B cell (primary cell): ENCODE measurements at regions of chr1 and their contacts with region 1.

Region 1: GRCh38 chr1:31762726-31763670 is 1.1 kb downstream of the ADGRB2 start:
- DNase-seq: peak; percentile 83
- ATAC-seq: peak; percentile 56
- H3K4me3 ChIP-seq: peak overlapping the region in 4 of 5 experiments; percentile 33 to 61 (median 50)
- H3K4me3 Mint-ChIP-seq: peak overlapping the region; percentile 83
- H3K27ac ChIP-seq: no peak overlapping the region
- H3K27ac Mint-ChIP-seq: peak overlapping the region; percentile 15
- H3K4me1 ChIP-seq: peaks cover 35 to 42% of the 10 kb centered on the region in 2 donors
- H3K4me1 Mint-ChIP-seq: peaks cover 34% of the 10 kb centered on the region
- H3K27me3 ChIP-seq: peaks cover 0 to 31% (median 15%) of the 10 kb centered on the region in 4 experiments
- H3K27me3 Mint-ChIP-seq: peaks cover 13% of the 10 kb centered on the region
- CTCF ChIP-seq: peak; percentile 80

Region 2: GRCh38 chr1:31715087-31715872 is 47.7 kb before region 1 on chr1:
- CTCF ChIA-PET with region 1: interaction called, 11 read pairs
- POLR2A ChIA-PET with region 1: no interaction called
- intact Hi-C with region 1: no loop called
- DNase-seq: peak; percentile 46
- ATAC-seq: peak; percentile 77
- H3K4me3 ChIP-seq: peak overlapping the region in 4 of 5 experiments; percentile 33 to 64 (median 54)
- H3K4me3 Mint-ChIP-seq: peak overlapping the region; percentile 76
- H3K27ac ChIP-seq: no peak overlapping the region
- H3K27ac Mint-ChIP-seq: no peak overlapping the region
- H3K4me1 ChIP-seq: peaks cover 19% of the 10 kb centered on the region in 2 donors
- H3K4me1 Mint-ChIP-seq: peaks cover 21% of the 10 kb centered on the region
- H3K27me3 ChIP-seq: peaks cover 0 to 45% (median 10%) of the 10 kb centered on the region in 4 experiments
- H3K27me3 Mint-ChIP-seq: peaks cover 56% of the 10 kb centered on the region
- CTCF ChIP-seq: peak; percentile 62

Region 3: GRCh38 chr1:31733389-31734219 is 29.4 kb before region 1 on chr1:
- CTCF ChIA-PET with region 1: no interaction called
- POLR2A ChIA-PET with region 1: no interaction called
- intact Hi-C with region 1: no loop called
- DNase-seq: no peak
- ATAC-seq: no peak
- H3K4me3 ChIP-seq: no peak overlapping the region
- H3K4me3 Mint-ChIP-seq: no peak overlapping the region
- H3K27ac ChIP-seq: no peak overlapping the region
- H3K27ac Mint-ChIP-seq: no peak overlapping the region
- H3K4me1 ChIP-seq: no peaks in the 10 kb centered on the region
- H3K4me1 Mint-ChIP-seq: peaks cover 8% of the 10 kb centered on the region
- H3K27me3 ChIP-seq: no peaks in the 10 kb centered on the region
- H3K27me3 Mint-ChIP-seq: peaks cover 3% of the 10 kb centered on the region
- CTCF ChIP-seq: no peak

Region 4: DNA sequence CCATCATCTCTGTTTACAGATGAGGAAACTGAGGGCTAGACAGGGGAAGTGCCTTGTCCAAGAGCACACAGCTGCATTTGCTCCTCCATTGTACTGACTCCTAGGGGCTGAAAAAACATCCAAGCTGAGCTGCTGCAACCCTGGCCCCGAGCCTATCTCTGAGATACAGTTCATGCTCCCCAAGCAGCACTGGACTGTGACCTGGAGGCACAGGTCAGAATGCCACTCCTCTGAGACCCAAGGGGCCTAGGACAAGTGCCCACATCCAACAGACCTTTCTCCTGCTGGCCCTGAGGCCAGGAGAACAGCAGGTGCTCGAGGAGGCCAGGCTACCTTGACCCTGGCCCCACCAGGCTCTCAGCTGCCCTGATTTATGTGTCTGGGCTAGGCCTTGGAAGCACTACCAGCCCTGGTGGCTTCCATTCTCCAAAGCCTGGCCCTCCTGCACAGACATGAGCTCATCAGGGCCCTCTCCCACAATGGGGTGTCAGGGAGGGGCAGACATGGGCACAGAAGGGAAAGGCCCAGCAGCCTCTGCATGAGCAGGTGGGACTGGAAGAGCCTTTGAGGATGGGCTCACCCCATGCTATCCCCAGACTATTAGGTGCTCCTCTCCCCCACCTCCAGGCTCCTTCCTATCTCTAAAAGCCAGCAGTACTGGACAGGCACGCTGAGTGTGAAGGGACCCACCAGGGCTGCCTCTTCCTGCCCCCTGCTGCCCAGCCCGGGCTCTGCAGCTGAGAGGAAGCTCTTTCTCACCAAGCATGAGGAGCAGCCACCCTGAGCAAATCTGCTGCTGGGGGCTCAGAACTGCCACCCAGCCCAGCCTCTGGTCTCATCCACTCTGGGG is 17.7 kb before region 1 on chr1:
- CTCF ChIA-PET with region 1: interaction called, 6 read pairs
- POLR2A ChIA-PET with region 1: interaction called, 5 read pairs
- intact Hi-C with region 1: loop called (anchors 2 kb)
- DNase-seq: peak; percentile 39
- ATAC-seq: peak; percentile 34
- H3K4me3 ChIP-seq: no peak overlapping the region
- H3K4me3 Mint-ChIP-seq: no peak overlapping the region
- H3K27ac ChIP-seq: peak overlapping the region; percentile 28 to 29
- H3K27ac Mint-ChIP-seq: peak overlapping the region; percentile 87
- H3K4me1 ChIP-seq: peaks cover 23 to 36% of the 10 kb centered on the region in 2 donors
- H3K4me1 Mint-ChIP-seq: peaks cover 45% of the 10 kb centered on the region
- H3K27me3 ChIP-seq: peaks cover 0 to 8% (median 2%) of the 10 kb centered on the region in 4 experiments
- H3K27me3 Mint-ChIP-seq: peaks cover 3% of the 10 kb centered on the region
- CTCF ChIP-seq: peak; percentile 44